CD8-positive, alpha-beta T cell (primary cell): ENCODE measurements at regions of chr13 and their contacts with region 1.

Region 1: DNA sequence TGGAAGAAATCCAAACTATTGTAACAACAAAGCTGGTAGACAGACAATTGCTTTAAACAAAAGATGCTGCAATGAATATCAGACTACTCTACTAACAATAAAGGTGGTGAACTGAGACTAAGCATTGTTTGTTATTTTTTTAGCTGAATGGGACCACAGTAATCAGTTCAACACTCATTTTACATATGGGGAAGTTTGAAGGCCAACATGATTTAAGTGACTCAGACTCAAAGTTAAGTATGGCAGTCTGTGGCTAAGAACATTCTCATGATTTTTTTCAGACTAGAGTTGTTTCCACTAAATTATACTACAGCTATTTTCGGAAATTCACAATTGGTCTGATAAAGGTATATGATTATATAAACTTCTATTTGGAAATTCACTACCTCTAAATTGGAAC is 10.4 kb downstream of the EXOSC8 start:
- DNase-seq: no peak
- ATAC-seq: no peak
- H3K4me3 ChIP-seq: no peak overlapping the region
- H3K4me3 Mint-ChIP-seq: no peak overlapping the region
- H3K27ac ChIP-seq: no peak overlapping the region
- H3K27ac Mint-ChIP-seq: no peak overlapping the region
- H3K4me1 ChIP-seq: no peaks in the 10 kb centered on the region
- H3K4me1 Mint-ChIP-seq: peaks cover 6% of the 10 kb centered on the region
- H3K27me3 ChIP-seq: no peaks in the 10 kb centered on the region
- H3K27me3 Mint-ChIP-seq: no peaks in the 10 kb centered on the region
- CTCF ChIP-seq: no peak

Region 2: DNA sequence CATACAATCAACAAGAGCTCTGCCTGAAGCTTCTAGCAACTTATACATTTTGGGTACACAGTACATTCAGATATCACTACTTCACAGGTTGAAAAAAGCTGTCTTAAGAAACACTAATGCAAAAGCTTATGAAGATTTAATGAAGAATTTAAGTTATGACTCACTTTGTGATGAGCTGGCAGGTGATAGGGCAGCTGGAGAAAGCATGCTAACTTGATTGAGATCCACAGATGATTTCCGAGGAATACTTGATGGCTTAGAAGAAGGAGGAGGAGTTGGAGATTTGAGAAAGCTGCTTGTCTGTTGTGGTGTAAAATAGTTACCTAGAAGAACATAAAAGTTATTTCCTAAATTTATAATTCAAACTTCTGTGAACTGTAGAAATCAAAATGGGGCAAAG is 12.9 kb after region 1 on chr13:
- CTCF ChIA-PET with region 1: no interaction called
- POLR2A ChIA-PET with region 1: no interaction called
- intact Hi-C with region 1: loop called in 1 of 2 experiments (anchors 2 kb)
- DNase-seq: no peak
- ATAC-seq: no peak
- H3K4me3 ChIP-seq: no peak overlapping the region
- H3K4me3 Mint-ChIP-seq: no peak overlapping the region
- H3K27ac ChIP-seq: no peak overlapping the region
- H3K27ac Mint-ChIP-seq: peak overlapping the region; percentile 56
- H3K4me1 ChIP-seq: no peaks in the 10 kb centered on the region
- H3K4me1 Mint-ChIP-seq: peaks cover 3% of the 10 kb centered on the region
- H3K27me3 ChIP-seq: no peaks in the 10 kb centered on the region
- H3K27me3 Mint-ChIP-seq: no peaks in the 10 kb centered on the region
- CTCF ChIP-seq: no peak

Region 3: DNA sequence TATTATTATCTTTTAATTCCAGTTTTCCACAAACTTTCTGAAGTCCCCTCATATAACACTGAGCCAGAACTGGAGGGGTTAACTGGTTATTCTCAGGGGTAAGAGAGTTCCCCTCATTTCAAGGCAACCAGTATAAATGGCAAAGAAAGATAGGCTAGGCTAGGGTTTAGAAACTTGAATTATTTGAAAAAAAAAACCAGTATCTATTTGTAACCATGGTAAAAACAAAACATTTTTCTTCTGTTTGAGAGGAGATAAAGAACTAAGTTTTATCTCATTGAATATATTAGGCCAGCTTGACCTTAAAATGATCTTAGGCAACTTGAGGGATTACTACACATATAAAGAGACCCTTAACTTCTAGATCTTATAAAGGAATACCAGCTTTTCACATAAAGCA is 28.9 kb after region 1 on chr13:
- CTCF ChIA-PET with region 1: no interaction called
- POLR2A ChIA-PET with region 1: no interaction called
- intact Hi-C with region 1: loop called (anchors 5 kb)
- DNase-seq: no peak
- ATAC-seq: no peak
- H3K4me3 ChIP-seq: no peak overlapping the region
- H3K4me3 Mint-ChIP-seq: no peak overlapping the region
- H3K27ac ChIP-seq: no peak overlapping the region
- H3K27ac Mint-ChIP-seq: no peak overlapping the region
- H3K4me1 ChIP-seq: no peaks in the 10 kb centered on the region
- H3K4me1 Mint-ChIP-seq: peaks cover 6% of the 10 kb centered on the region
- H3K27me3 ChIP-seq: no peaks in the 10 kb centered on the region
- H3K27me3 Mint-ChIP-seq: no peaks in the 10 kb centered on the region
- CTCF ChIP-seq: no peak

Region 4: DNA sequence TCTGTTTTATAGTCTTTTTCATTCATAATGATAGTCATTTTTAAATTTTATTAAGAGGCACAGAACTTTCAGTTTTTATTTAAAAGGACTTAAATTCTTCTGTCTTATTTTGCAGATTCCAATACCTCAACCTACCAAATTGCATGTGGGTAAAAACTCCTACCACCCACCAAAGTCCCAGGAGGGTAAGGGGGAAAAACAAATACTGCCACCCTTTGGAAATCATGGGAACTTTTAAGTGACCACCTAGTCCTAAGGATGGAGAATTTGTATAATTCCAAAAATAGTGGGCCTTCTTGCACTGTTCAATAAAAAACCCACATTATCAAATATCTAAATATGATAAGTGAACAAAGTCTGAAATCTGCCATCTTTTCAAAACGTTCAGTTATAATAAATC is 38.8 kb after region 1 on chr13:
- CTCF ChIA-PET with region 1: no interaction called
- POLR2A ChIA-PET with region 1: no interaction called
- intact Hi-C with region 1: loop called in 1 of 2 experiments (anchors 5 kb)
- DNase-seq: no peak
- ATAC-seq: no peak
- H3K4me3 ChIP-seq: no peak overlapping the region
- H3K4me3 Mint-ChIP-seq: no peak overlapping the region
- H3K27ac ChIP-seq: no peak overlapping the region
- H3K27ac Mint-ChIP-seq: no peak overlapping the region
- H3K4me1 ChIP-seq: no peaks in the 10 kb centered on the region
- H3K4me1 Mint-ChIP-seq: peaks cover 46% of the 10 kb centered on the region
- H3K27me3 ChIP-seq: no peaks in the 10 kb centered on the region
- H3K27me3 Mint-ChIP-seq: no peaks in the 10 kb centered on the region
- CTCF ChIP-seq: no peak